ENCODE measurements at regions of chr20 and their contacts with region 1.

Region 1: GRCh38 chr20:35994994-35995453 is 26.6 kb downstream of the CNBD2 start:
- DNase-seq: peak; percentile 85
- H3K4me3 ChIP-seq: no peak overlapping the region
- H3K27ac ChIP-seq: no peak overlapping the region
- H3K4me1 ChIP-seq: no peaks in the 10 kb centered on the region
- H3K27me3 ChIP-seq: peaks cover 0 to under 1% of the 10 kb centered on the region in 2 experiments
- CTCF ChIP-seq: peak; percentile 89 to 93
- POLR2A ChIP-seq: no peak

Region 2: DNA sequence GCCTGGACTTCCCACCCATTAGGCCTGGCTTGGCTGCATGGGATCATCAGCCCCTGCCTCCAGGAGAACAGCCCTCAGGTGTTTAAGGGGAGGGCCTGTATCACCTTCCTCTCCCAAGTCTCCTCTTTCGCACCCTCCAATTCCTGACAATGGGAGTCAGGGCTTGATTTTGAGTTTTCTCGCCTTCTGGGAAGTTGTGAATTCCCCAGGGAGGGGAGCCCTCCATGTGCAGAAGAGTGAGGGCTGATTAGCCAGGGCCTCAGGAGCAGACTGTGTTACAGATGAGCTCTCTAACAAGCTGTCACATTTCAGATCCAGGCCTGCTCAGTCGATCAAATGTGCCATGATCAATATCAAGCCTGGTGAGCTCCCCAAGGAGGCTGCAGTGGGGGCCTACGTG is 15.8 kb after region 1 on chr20:
- CTCF ChIA-PET with region 1: interaction called, 21 read pairs
- POLR2A ChIA-PET with region 1: no interaction called
- dilution Hi-C with region 1: no loop called
- intact Hi-C with region 1: no loop called
- DNase-seq: no peak
- H3K4me3 ChIP-seq: no peak overlapping the region
- H3K27ac ChIP-seq: no peak overlapping the region
- H3K4me1 ChIP-seq: no peaks in the 10 kb centered on the region
- H3K27me3 ChIP-seq: no peaks in the 10 kb centered on the region
- CTCF ChIP-seq: no peak
- POLR2A ChIP-seq: no peak

Region 3: GRCh38 chr20:36074983-36075382 is 80.0 kb after region 1 on chr20:
- CTCF ChIA-PET with region 1: interaction called, 10 read pairs
- POLR2A ChIA-PET with region 1: no interaction called
- dilution Hi-C with region 1: no loop called
- intact Hi-C with region 1: no loop called
- DNase-seq: no peak
- H3K4me3 ChIP-seq: no peak overlapping the region
- H3K27ac ChIP-seq: no peak overlapping the region
- H3K4me1 ChIP-seq: no peaks in the 10 kb centered on the region
- H3K27me3 ChIP-seq: peaks cover 5 to 8% of the 10 kb centered on the region in 2 experiments
- CTCF ChIP-seq: no peak
- POLR2A ChIP-seq: no peak

Region 4: DNA sequence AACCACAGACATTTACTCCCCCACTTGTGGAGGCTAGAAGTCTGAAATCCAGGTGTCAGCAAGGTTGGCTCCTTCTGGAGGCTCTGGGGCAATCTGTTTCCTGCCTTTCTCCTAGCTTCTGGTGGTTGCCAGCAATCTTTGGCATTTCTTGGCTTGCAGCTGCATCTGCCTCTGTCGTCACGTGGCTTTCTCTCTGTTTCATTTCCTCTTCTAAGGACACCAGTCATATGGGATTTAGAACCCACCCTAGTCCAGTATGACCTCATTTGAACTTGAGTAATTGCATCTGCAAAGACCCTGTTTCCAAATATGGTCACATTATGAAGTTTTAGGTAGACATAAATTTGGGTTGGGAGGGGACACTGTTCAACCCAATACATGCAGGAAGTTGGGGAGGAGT is 103.3 kb after region 1 on chr20:
- CTCF ChIA-PET with region 1: interaction called, 50 read pairs
- POLR2A ChIA-PET with region 1: no interaction called
- dilution Hi-C with region 1: no loop called
- intact Hi-C with region 1: loop called (anchors 5 kb)
- DNase-seq: peak; percentile 83
- H3K4me3 ChIP-seq: no peak overlapping the region
- H3K27ac ChIP-seq: peak overlapping the region; percentile 54
- H3K4me1 ChIP-seq: peaks cover 28% of the 10 kb centered on the region
- H3K27me3 ChIP-seq: no peaks in the 10 kb centered on the region
- CTCF ChIP-seq: no peak
- POLR2A ChIP-seq: no peak

Region 5: GRCh38 chr20:36145877-36146707 is 151.1 kb after region 1 on chr20:
- CTCF ChIA-PET with region 1: interaction called, 1,267 read pairs
- POLR2A ChIA-PET with region 1: no interaction called
- dilution Hi-C with region 1: no loop called
- intact Hi-C with region 1: no loop called
- DNase-seq: no peak
- H3K4me3 ChIP-seq: no peak overlapping the region
- H3K27ac ChIP-seq: no peak overlapping the region
- H3K4me1 ChIP-seq: peaks cover 9% of the 10 kb centered on the region
- H3K27me3 ChIP-seq: no peaks in the 10 kb centered on the region
- CTCF ChIP-seq: no peak
- POLR2A ChIP-seq: no peak

Region 6: GRCh38 chr20:36217226-36217625 is 222.2 kb after region 1 on chr20:
- CTCF ChIA-PET with region 1: no interaction called
- POLR2A ChIA-PET with region 1: no interaction called
- dilution Hi-C with region 1: no loop called
- intact Hi-C with region 1: no loop called
- DNase-seq: no peak
- H3K4me3 ChIP-seq: no peak overlapping the region
- H3K27ac ChIP-seq: no peak overlapping the region
- H3K4me1 ChIP-seq: no peaks in the 10 kb centered on the region
- H3K27me3 ChIP-seq: peaks cover 0 to 2% of the 10 kb centered on the region in 2 experiments
- CTCF ChIP-seq: no peak
- POLR2A ChIP-seq: no peak